ENCODE measurements at regions of chr13 and their contacts with region 1.

Region 1: DNA sequence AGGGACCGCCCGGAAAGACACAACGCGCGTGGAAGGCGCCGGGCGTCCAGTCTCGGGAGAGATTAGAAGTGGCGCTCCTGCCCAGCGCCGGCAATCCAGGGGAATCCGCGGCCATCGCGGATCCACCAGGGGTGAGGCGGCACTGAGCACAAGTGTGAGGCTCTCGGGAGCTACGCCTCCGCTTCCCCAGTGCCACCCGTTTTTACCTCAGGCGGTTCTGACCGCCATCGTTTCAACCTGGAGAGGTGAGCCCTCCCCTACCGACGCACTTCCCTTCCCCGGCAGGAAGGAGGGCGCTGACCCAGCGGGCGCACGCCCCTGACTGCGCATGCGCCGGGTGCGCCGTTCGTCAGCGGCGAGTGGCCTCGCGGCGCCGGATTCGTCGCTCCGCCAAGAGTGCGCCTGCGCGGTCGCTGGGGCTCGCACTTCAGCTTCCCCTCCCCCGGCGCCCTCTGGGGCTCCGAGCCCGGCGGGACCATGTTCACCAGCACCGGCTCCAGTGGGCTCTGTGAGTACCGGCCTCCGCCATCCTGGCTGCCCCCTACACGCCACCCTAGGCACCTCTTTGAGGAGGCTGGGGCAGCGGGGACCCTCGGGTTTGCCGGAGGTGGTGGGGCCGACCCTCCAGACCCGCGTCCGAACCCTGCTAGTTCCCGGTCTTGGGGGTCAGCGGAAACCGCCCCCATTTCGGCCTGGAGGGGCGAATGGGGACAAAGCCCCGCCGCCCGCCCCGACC is at the start of gene UBAC2:
- DNase-seq: peak; percentile 95 to 99 (median 98)
- H3K4me3 ChIP-seq: peak within 1 kb of the TSS; percentile 79 to 89
- H3K4me3 Mint-ChIP-seq: peak within 1 kb of the TSS; percentile 93 to 100 (median 99)
- H3K27ac ChIP-seq: peak within 1 kb of the TSS; percentile 97
- H3K27ac Mint-ChIP-seq: peak within 1 kb of the TSS; percentile 85 to 98 (median 97)
- H3K4me1 ChIP-seq: peaks cover 61% of the 10 kb centered on the region
- H3K4me1 Mint-ChIP-seq: peaks cover 45 to 69% (median 55%) of the 10 kb centered on the region in 4 donors
- H3K27me3 ChIP-seq: no peaks in the 10 kb centered on the region
- H3K27me3 Mint-ChIP-seq: no peaks in the 10 kb centered on the region
- total RNA-seq, gene UBAC2: 88.4 to 89.0 TPM

Region 2: DNA sequence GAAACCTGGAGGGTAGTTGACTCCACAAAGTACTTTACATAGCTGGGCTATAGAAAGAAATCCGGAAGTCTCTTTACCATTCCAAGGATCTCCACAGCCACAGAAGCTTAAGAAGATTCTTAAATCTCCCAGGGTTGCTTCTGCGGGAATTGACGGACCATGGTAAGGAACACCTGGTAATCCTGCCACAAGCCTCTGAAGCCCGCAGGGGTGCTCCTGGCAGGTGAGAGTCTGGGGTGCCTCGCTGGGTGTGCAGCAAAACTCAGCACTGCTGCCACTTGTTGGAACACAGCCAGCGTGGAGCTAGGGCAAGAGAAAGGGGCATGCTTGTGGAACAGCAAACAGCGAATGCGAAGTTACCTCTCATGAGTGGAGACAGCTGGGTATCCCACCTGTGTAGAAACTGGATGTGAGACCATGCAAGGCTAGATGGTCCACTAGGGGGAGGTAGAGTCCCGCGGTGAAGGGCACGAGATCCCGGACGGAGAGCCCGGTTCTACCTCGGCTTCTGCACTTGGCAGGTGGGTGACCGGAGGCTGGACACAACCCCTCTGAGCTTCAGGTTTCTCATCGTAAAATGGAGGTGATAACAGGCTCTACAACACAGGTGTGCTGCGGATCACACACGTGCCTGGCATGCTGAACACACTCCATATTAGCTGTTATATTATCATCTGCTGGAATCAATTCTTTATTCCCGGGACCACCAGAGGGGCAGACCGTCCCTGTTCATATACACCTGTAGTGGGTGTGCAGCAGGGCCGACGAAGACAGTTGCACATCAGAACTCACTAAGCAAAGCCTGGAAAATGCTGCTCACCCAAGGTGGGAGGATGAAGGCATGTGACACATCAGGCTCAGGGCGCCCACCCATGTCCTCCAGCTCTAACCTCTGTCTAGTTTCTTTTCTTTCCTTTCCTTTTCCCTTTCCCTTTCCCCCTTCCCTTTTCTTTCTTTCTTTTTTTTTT is 24.0 kb before region 1 on chr13:
- CTCF ChIA-PET with region 1: interaction called, 80 read pairs
- POLR2A ChIA-PET with region 1: interaction called, 14 read pairs
- intact Hi-C with region 1: loop called (anchors 2 kb)
- DNase-seq: peak; percentile 69 to 79 (median 75)
- H3K4me3 ChIP-seq: peak overlapping the region in 1 of 2 donors; percentile 19
- H3K4me3 Mint-ChIP-seq: peak overlapping the region in 7 of 8 donors; percentile 62 to 80 (median 71)
- H3K27ac ChIP-seq: no peak overlapping the region
- H3K27ac Mint-ChIP-seq: peak overlapping the region in 6 of 7 donors; percentile 37 to 81 (median 68)
- H3K4me1 ChIP-seq: peaks cover 44% of the 10 kb centered on the region
- H3K4me1 Mint-ChIP-seq: peaks cover 32 to 43% (median 36%) of the 10 kb centered on the region in 4 donors
- H3K27me3 ChIP-seq: no peaks in the 10 kb centered on the region
- H3K27me3 Mint-ChIP-seq: no peaks in the 10 kb centered on the region

Region 3: GRCh38 chr13:99214232-99214631 is 13.6 kb after region 1 on chr13:
- CTCF ChIA-PET with region 1: interaction called, 24 read pairs
- POLR2A ChIA-PET with region 1: interaction called, 251 read pairs
- intact Hi-C with region 1: loop called (anchors 1 kb)
- DNase-seq: peak in 1 of 5 donors; percentile 61
- H3K4me3 ChIP-seq: peak overlapping the region in 1 of 2 donors; percentile 62
- H3K4me3 Mint-ChIP-seq: peak overlapping the region; percentile 73 to 97 (median 94)
- H3K27ac ChIP-seq: peak overlapping the region; percentile 68
- H3K27ac Mint-ChIP-seq: peak overlapping the region; percentile 96 to 99 (median 99)
- H3K4me1 ChIP-seq: peaks cover 78% of the 10 kb centered on the region
- H3K4me1 Mint-ChIP-seq: peaks cover 55 to 92% (median 74%) of the 10 kb centered on the region in 4 donors
- H3K27me3 ChIP-seq: no peaks in the 10 kb centered on the region
- H3K27me3 Mint-ChIP-seq: no peaks in the 10 kb centered on the region

Region 4: DNA sequence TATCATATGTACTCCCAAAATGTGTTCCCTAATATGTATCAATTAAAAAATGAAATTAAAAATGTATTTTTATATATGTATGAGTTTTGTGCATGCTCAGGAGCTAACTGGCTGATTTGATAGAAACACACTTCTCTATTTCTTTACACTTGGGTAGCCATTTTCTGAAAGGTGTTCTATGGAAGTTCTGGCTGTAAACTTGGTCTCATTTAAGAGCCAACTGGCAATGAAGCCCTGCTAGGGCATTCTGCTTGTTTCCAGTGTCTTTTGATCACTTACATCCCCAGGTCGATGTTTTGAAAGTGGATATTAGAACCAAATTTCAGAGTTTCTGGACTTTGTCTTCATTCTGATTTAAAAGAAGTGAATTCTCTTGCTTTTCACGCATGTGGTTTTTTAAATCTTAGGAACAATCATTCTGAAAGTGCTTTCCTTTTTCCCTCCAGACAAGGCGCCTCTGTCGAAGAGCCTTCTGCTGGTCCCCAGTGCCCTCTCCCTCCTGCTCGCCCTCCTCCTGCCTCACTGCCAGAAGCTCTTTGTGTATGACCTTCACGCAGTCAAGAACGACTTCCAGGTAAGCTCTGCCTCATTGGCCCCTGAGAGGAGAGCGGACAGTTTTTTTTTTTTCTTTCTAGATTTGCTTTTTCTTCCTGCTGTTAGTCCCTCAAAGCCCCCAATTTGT is 37.5 kb after region 1 on chr13:
- CTCF ChIA-PET with region 1: interaction called, 13 read pairs
- POLR2A ChIA-PET with region 1: interaction called, 23 read pairs
- intact Hi-C with region 1: loop called (anchors 5 kb)
- DNase-seq: peak in 3 of 5 donors; percentile 38 to 59 (median 42)
- H3K4me3 ChIP-seq: peak overlapping the region in 1 of 2 donors; percentile 55
- H3K4me3 Mint-ChIP-seq: peak overlapping the region; percentile 86 to 92 (median 88)
- H3K27ac ChIP-seq: peak overlapping the region; percentile 63
- H3K27ac Mint-ChIP-seq: peak overlapping the region; percentile 84 to 99 (median 97)
- H3K4me1 ChIP-seq: peaks cover 62% of the 10 kb centered on the region
- H3K4me1 Mint-ChIP-seq: peaks cover 39 to 71% (median 56%) of the 10 kb centered on the region in 4 donors
- H3K27me3 ChIP-seq: no peaks in the 10 kb centered on the region
- H3K27me3 Mint-ChIP-seq: no peaks in the 10 kb centered on the region

Region 5: GRCh38 chr13:99258210-99258860 is 57.7 kb after region 1 on chr13 and contains the start of gene GPR18:
- CTCF ChIA-PET with region 1: interaction called, 325 read pairs
- POLR2A ChIA-PET with region 1: interaction called, 152 read pairs
- intact Hi-C with region 1: loop called (anchors 1 kb)
- DNase-seq: peak; percentile 50 to 69 (median 62)
- H3K4me3 ChIP-seq: peak within 1 kb of the TSS; percentile 52 to 67
- H3K4me3 Mint-ChIP-seq: peak within 1 kb of the TSS; percentile 89 to 98 (median 94)
- H3K27ac ChIP-seq: peak within 1 kb of the TSS; percentile 60
- H3K27ac Mint-ChIP-seq: peak within 1 kb of the TSS; percentile 84 to 96 (median 94)
- H3K4me1 ChIP-seq: peaks cover 55% of the 10 kb centered on the region
- H3K4me1 Mint-ChIP-seq: peaks cover 47 to 85% (median 59%) of the 10 kb centered on the region in 4 donors
- H3K27me3 ChIP-seq: no peaks in the 10 kb centered on the region
- H3K27me3 Mint-ChIP-seq: no peaks in the 10 kb centered on the region
- total RNA-seq, gene GPR18: 21.5 to 22.8 TPM

Region 6: DNA sequence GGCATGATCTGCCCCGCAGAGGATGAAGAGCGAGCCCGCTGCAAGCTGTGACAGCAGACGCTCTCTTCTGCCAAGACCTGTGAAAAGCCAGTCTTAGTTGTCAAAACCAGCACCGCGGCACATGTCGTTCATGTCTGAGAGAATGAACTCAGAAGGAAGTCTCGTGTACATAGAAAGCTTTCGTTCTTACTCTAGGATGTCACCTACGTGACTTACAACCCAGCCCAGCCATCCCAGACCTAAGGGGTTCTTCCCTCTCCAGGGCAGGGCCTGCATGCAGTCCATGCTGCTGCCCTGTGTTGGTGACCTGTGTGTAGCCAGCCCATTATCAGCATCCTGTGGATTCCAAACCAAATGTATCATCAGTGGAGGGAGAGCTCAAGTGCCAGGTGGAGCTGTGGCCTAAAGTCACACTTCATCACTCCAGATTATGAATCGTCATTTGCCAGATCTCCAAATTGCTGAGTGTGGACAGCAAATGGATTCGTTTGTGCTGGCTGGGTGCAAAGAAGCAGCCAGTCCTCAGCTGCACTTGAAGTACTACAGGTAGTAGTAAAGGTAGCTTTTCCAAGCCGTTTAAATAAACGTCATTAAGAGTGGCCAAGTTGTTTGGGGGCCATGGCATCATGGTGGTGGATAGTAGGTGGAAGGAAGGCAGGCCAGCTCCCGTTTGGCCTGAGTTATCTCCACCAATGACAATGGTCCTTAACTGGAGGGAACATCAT is 180.5 kb after region 1 on chr13:
- CTCF ChIA-PET with region 1: interaction called, 3 read pairs
- POLR2A ChIA-PET with region 1: interaction called, 7 read pairs
- intact Hi-C with region 1: loop called (anchors 5 kb)
- DNase-seq: peak in 4 of 5 donors; percentile 52 to 67 (median 61)
- H3K4me3 ChIP-seq: peak overlapping the region in 1 of 2 donors; percentile 0
- H3K4me3 Mint-ChIP-seq: peak overlapping the region in 7 of 8 donors; percentile 61 to 89 (median 73)
- H3K27ac ChIP-seq: peak overlapping the region; percentile 51
- H3K27ac Mint-ChIP-seq: peak overlapping the region; percentile 92 to 99 (median 96)
- H3K4me1 ChIP-seq: peaks cover 87% of the 10 kb centered on the region
- H3K4me1 Mint-ChIP-seq: peaks cover 70 to 97% (median 87%) of the 10 kb centered on the region in 4 donors
- H3K27me3 ChIP-seq: no peaks in the 10 kb centered on the region
- H3K27me3 Mint-ChIP-seq: no peaks in the 10 kb centered on the region

Region 7: DNA sequence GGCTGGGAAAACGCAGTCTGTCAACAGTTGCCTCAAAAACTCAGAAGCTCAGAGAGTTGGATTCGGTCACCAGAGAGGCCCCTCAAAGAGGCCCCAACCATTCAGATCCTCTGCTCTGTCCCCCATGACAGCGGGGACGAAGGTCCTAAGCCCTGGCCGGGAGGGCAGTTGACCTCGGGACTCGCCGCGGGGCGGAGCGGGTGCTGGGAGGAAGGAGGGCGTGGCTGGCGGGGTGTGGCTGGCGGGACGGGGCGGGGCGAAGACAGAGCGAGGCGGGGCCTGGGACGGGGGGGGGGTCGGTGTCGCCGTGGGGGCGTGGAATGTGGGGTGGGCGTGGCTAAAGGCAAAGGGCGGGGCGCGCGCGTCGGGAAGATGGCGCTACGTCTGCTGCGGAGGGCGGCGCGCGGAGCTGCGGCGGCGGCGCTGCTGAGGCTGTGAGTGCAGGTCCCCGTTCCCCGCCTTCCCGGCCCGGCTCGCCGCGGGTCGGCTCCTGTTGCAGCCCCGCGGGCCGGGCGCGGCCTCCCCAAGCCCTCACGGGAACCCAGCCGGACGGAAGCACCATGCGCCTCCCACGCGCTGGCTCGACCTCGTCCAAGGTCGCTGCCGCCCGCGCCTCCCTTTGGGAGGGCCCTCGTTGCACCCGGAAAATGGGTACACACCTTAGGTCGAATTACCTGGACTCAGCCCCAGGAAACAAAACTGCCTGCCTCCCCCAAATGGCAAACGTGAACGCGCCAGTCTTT is 405.9 kb after region 1 on chr13:
- CTCF ChIA-PET with region 1: no interaction called
- POLR2A ChIA-PET with region 1: no interaction called
- intact Hi-C with region 1: loop called (anchors 2 kb)
- DNase-seq: peak; percentile 87 to 90 (median 89)
- H3K4me3 ChIP-seq: peak within 1 kb of the TSS; percentile 53 to 78
- H3K4me3 Mint-ChIP-seq: peak within 1 kb of the TSS; percentile 88 to 97 (median 90)
- H3K27ac ChIP-seq: peak within 1 kb of the TSS; percentile 71
- H3K27ac Mint-ChIP-seq: peak within 1 kb of the TSS; percentile 91 to 96 (median 95)
- H3K4me1 ChIP-seq: peaks cover 35% of the 10 kb centered on the region
- H3K4me1 Mint-ChIP-seq: peaks cover 28 to 59% (median 46%) of the 10 kb centered on the region in 4 donors
- H3K27me3 ChIP-seq: no peaks in the 10 kb centered on the region
- H3K27me3 Mint-ChIP-seq: no peaks in the 10 kb centered on the region